ENCODE measurements at regions of chr7 and their contacts with region 1.

Region 1: GRCh38 chr7:124784879-124785818 is 19.6 kb upstream of the GPR37 start:
- DNase-seq: peak; percentile 47
- ATAC-seq: peak; percentile 94
- H3K4me3 ChIP-seq: no peak overlapping the region
- H3K27ac ChIP-seq: no peak overlapping the region
- H3K4me1 ChIP-seq: no peaks in the 10 kb centered on the region
- H3K27me3 ChIP-seq: no peaks in the 10 kb centered on the region
- CTCF ChIP-seq: peak; percentile 79 to 88 (median 84)
- POLR2A ChIP-seq: no peak
- RAD21 ChIP-seq: peak; percentile 94

Region 2: GRCh38 chr7:124101173-124101768 is 683.9 kb before region 1 on chr7:
- CTCF ChIA-PET with region 1: interaction called, 3 read pairs
- POLR2A ChIA-PET with region 1: no interaction called
- RAD21 ChIA-PET with region 1: no interaction called
- intact Hi-C with region 1: loop called (anchors 1 kb)
- DNase-seq: peak; percentile 28
- ATAC-seq: peak; percentile 58
- H3K4me3 ChIP-seq: no peak overlapping the region
- H3K27ac ChIP-seq: no peak overlapping the region
- H3K4me1 ChIP-seq: no peaks in the 10 kb centered on the region
- H3K27me3 ChIP-seq: no peaks in the 10 kb centered on the region
- CTCF ChIP-seq: peak; percentile 48 to 75 (median 58); a peak in 5 of 6 replicates
- POLR2A ChIP-seq: no peak
- RAD21 ChIP-seq: peak; percentile 77

Region 3: GRCh38 chr7:124152859-124153692 is 632.1 kb before region 1 on chr7:
- CTCF ChIA-PET with region 1: interaction called, 37 read pairs
- POLR2A ChIA-PET with region 1: no interaction called
- RAD21 ChIA-PET with region 1: interaction called in 1 of 2 experiments, 3 read pairs
- intact Hi-C with region 1: loop called (anchors 1 kb)
- DNase-seq: peak; percentile 47
- ATAC-seq: peak; percentile 97
- H3K4me3 ChIP-seq: no peak overlapping the region
- H3K27ac ChIP-seq: no peak overlapping the region
- H3K4me1 ChIP-seq: no peaks in the 10 kb centered on the region
- H3K27me3 ChIP-seq: no peaks in the 10 kb centered on the region
- CTCF ChIP-seq: peak; percentile 44 to 65 (median 52); a peak in 5 of 6 replicates
- POLR2A ChIP-seq: no peak
- RAD21 ChIP-seq: peak; percentile 53

Region 4: GRCh38 chr7:124171068-124171467 is 614.1 kb before region 1 on chr7:
- CTCF ChIA-PET with region 1: interaction called, 7 read pairs
- POLR2A ChIA-PET with region 1: no interaction called
- RAD21 ChIA-PET with region 1: no interaction called
- intact Hi-C with region 1: loop called (anchors 1 kb)
- DNase-seq: peak; percentile 15
- ATAC-seq: 0 out of 2 replicates have a peak, but pooled peaks have one; percentile 53
- H3K4me3 ChIP-seq: no peak overlapping the region
- H3K27ac ChIP-seq: no peak overlapping the region
- H3K4me1 ChIP-seq: no peaks in the 10 kb centered on the region
- H3K27me3 ChIP-seq: no peaks in the 10 kb centered on the region
- CTCF ChIP-seq: peak; percentile 30 to 49 (median 41); a peak in 4 of 6 replicates
- POLR2A ChIP-seq: no peak
- RAD21 ChIP-seq: peak; percentile 69

Measured in HCT116 (cell line).